ENCODE measurements at regions of chr16 and their contacts with region 1.

Region 1: GRCh38 chr16:28277537-28278388 is 14.6 kb upstream of the SBK1 start:
- DNase-seq: peak; percentile 87
- H3K4me3 ChIP-seq: peak overlapping the region in 2 of 4 donors; percentile 29 to 37
- H3K27ac ChIP-seq: no peak overlapping the region
- H3K4me1 ChIP-seq: peaks cover 2 to 9% (median 6%) of the 10 kb centered on the region in 4 donors
- H3K27me3 ChIP-seq: peaks cover 32% of the 10 kb centered on the region
- CTCF ChIP-seq: peak; percentile 93 to 98 (median 97)
- EP300 ChIP-seq: no peak
- POLR2A ChIP-seq: no peak

Region 2: DNA sequence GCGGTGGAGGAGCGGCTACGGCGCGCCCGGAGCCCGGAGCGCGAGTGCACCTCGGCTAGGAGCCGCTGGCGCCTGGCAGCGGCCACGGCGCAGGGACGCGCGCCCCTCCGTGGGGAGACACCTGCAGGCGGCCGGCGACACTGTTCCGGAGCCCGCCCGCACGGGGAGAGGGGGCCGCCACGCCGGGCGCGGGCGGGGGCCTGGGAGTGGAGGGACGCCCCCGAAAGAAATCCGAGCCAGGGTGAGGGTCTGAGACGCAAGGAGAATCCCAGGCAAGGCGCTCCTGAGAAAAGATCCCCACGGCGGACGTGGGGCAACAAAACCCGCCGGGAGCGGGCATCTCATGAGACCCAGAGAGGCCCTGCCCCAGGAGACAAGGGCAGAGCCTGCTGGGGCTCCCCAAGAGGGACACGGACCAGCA is 214.1 kb before region 1 on chr16 and contains the start of gene GSG1L:
- in situ Hi-C with region 1: no loop called
- intact Hi-C with region 1: no loop called
- DNase-seq: no peak
- H3K4me3 ChIP-seq: peak within 1 kb of the TSS in 2 of 4 donors; percentile 21 to 42
- H3K27ac ChIP-seq: no peak within 1 kb of the TSS
- H3K4me1 ChIP-seq: peaks cover 0 to 5% (median 0%) of the 10 kb centered on the region in 4 donors
- H3K27me3 ChIP-seq: peaks cover 61% of the 10 kb centered on the region
- CTCF ChIP-seq: no peak
- EP300 ChIP-seq: no peak
- POLR2A ChIP-seq: no peak
- total RNA-seq, gene GSG1L: not detected

Region 3: DNA sequence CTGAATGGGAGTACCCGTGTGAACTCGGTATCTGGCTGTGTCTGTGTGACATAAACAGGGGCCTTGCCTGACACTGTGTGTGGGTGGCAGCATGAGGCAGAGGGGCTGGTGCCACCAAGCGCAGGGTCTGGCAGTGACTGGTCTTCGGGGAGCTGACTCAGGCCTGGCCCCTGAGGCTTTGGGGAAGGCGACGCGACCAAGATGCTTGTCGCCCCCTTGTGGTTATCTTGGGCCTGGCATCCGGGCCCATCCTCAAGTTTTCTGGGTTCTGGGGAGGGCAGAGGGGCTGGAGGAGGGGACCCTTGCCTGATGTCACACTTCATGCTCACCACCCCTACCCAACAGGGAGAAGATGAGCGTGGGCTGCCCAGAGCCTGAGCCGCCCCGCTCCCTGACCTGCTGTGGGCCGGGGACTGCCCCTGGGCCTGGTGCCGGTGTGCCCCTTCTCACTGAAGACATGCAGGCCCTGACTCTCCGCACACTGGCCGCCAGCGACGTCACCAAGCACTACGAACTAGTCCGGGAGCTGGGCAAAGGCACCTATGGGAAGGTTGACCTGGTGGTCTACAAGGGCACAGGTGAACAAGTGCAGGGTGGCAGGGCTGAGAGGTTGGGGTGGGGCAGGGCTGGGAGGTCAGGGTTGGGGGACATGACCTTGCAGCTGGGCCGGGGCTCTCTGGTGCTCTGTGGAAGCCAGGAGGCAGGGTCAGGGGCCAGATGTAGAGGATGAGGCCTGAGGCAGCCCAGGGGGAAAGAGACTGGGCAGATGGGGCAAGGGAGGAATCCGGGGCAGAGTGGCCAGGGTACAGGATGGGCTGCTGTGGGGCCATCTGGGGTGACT is 39.5 kb after region 1 on chr16:
- in situ Hi-C with region 1: loop called in 2 of 4 experiments (anchors 5 to 10 kb)
- intact Hi-C with region 1: loop called (anchors 2 kb)
- DNase-seq: peak; percentile 56
- H3K4me3 ChIP-seq: no peak overlapping the region
- H3K27ac ChIP-seq: no peak overlapping the region
- H3K4me1 ChIP-seq: no peaks in the 10 kb centered on the region
- H3K27me3 ChIP-seq: no peaks in the 10 kb centered on the region
- CTCF ChIP-seq: peak; percentile 74 to 92 (median 88)
- EP300 ChIP-seq: no peak
- POLR2A ChIP-seq: no peak

Region 4: DNA sequence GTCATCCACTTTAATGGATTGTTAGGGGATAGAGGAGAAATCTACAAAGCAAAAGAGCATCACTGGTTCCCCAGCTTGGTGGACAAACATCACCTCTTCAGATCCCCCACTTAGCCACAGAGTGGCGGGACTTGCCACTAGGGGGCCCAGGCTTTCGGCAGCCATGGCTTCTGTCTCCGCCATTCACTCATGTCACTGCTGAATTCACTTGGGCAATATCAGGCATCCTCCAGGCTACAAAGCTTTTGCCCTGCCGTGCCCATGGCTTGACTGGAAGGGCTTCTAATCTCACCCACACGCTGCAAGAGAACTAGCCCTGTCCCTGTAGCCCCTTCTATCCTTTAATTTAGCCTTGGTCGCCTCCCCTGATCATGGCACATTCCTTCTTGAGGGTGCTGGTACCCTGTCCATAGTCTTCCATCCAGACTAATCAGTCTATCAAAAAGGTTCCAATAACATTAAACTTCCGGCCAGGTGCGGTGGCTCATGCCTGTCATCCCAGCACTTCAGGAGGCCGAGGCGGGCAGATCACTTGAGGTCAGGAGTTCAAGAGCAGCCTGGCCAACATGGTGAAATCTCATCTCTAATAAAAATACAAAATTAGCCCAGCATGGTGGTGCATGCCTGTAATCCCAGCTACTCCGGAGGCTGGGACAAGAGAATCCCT is 49.3 kb after region 1 on chr16:
- in situ Hi-C with region 1: loop called in 1 of 4 experiments (anchors 10 kb)
- intact Hi-C with region 1: no loop called
- DNase-seq: peak; percentile 75
- H3K4me3 ChIP-seq: no peak overlapping the region
- H3K27ac ChIP-seq: no peak overlapping the region
- H3K4me1 ChIP-seq: peaks cover 0 to 2% (median 0%) of the 10 kb centered on the region in 4 donors
- H3K27me3 ChIP-seq: no peaks in the 10 kb centered on the region
- CTCF ChIP-seq: peak; percentile 58 to 76 (median 70)
- EP300 ChIP-seq: no peak
- POLR2A ChIP-seq: no peak